HepG2 (cell line): ENCODE measurements at regions of chr20 and their contacts with region 1.

Region 1: DNA sequence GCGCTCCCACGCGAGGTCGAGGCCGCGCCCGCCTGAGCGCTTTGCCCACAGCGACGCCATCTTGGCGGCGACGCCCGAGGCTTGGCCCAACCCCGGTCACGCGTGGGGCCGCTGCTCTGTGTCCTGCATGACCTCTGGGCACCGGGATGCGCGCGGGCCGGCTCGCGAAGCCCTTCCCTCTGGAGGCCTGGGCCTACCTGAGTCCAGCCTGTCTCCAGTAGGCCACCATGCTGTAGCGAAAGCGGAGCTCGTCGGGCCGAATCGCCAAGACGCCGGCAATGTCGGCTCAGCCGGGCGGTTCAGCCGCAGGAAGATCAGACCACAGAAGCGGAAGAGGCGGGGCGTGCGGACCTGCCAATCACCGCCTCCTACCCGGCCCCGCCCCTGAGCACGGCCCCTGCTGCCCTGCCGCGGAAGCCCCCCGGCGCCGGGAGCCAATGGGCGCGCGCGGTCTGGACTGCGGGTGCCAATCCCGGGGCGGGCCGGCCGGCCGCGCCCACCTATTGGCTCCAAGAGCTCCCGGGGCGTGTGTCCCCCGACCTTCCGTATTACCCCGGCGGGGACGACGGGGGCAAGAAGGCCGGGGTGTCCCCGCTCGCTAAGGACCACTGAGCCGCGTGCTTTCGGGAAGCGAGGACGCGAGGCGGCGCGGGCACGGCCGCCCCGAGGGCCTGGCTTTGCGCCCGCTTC is at the start of gene ATP5F1E:
- DNase-seq: peak; percentile 95
- ATAC-seq: peak; percentile 99
- H3K4me3 ChIP-seq: peak within 1 kb of the TSS; percentile 78 to 97 (median 93)
- H3K27ac ChIP-seq: peak within 1 kb of the TSS; percentile 68
- H3K4me1 ChIP-seq: peaks cover 52% of the 10 kb centered on the region
- H3K27me3 ChIP-seq: no peaks in the 10 kb centered on the region; a peak in 1 of 5 replicates
- CTCF ChIP-seq: peak; percentile 21; the same call in 1 of the 2 replicates
- EP300 ChIP-seq: 0 out of 4 replicates have a peak, but pooled peaks of 1 of the 2 experiments have one; percentile 5
- POLR2A ChIP-seq: peak; percentile 91 to 95
- RAD21 ChIP-seq: peak; percentile 69
- total RNA-seq, gene ATP5F1E: 134 and 163 TPM in 2 replicates

Region 2: GRCh38 chr20:58980700-58981627 is 51.2 kb before region 1 on chr20 and contains the start of gene NELFCD:
- CTCF ChIA-PET with region 1: no interaction called
- POLR2A ChIA-PET with region 1: interaction called, 68 read pairs
- in situ Hi-C with region 1: no loop called
- intact Hi-C with region 1: loop called (anchors 1 kb)
- DNase-seq: peak; percentile 90
- ATAC-seq: peak; percentile 92
- H3K4me3 ChIP-seq: peak within 1 kb of the TSS; percentile 75 to 85 (median 80)
- H3K27ac ChIP-seq: peak within 1 kb of the TSS; percentile 74
- H3K4me1 ChIP-seq: peaks cover 57% of the 10 kb centered on the region
- H3K27me3 ChIP-seq: no peaks in the 10 kb centered on the region; a peak in 1 of 5 replicates
- CTCF ChIP-seq: peak; percentile 31; the same call in 1 of the 2 replicates
- EP300 ChIP-seq: 0 out of 4 replicates have a peak, but pooled peaks of 1 of the 2 experiments have one; percentile 21
- POLR2A ChIP-seq: peak; percentile 78 to 95
- RAD21 ChIP-seq: peak; percentile 38
- total RNA-seq, gene NELFCD: 159 and 160 TPM in 2 replicates

Region 3: GRCh38 chr20:59004763-59005522 is 27.2 kb before region 1 on chr20:
- CTCF ChIA-PET with region 1: no interaction called
- POLR2A ChIA-PET with region 1: interaction called, 19 read pairs
- in situ Hi-C with region 1: no loop called
- intact Hi-C with region 1: no loop called
- DNase-seq: peak; percentile 71
- ATAC-seq: peak; percentile 65
- H3K4me3 ChIP-seq: peak overlapping the region; percentile 13 to 73 (median 20); a peak in 5 of 6 replicates
- H3K27ac ChIP-seq: no peak overlapping the region
- H3K4me1 ChIP-seq: peaks cover 86% of the 10 kb centered on the region
- H3K27me3 ChIP-seq: peaks cover 2 to 27% of the 10 kb centered on the region in 2 experiments
- CTCF ChIP-seq: peak; percentile 9; the same call in 1 of the 2 replicates
- EP300 ChIP-seq: peak in 1 of 2 experiments; percentile 42; a peak in 2 of 4 replicates
- POLR2A ChIP-seq: no peak
- RAD21 ChIP-seq: no peak

Region 4: GRCh38 chr20:59020938-59021551 is 11.1 kb before region 1 on chr20:
- CTCF ChIA-PET with region 1: no interaction called
- POLR2A ChIA-PET with region 1: interaction called, 61 read pairs
- in situ Hi-C with region 1: no loop called
- intact Hi-C with region 1: loop called (anchors 1 kb)
- DNase-seq: no peak
- ATAC-seq: no peak
- H3K4me3 ChIP-seq: no peak overlapping the region
- H3K27ac ChIP-seq: no peak overlapping the region
- H3K4me1 ChIP-seq: peaks cover 45% of the 10 kb centered on the region
- H3K27me3 ChIP-seq: no peaks in the 10 kb centered on the region
- CTCF ChIP-seq: no peak
- EP300 ChIP-seq: no peak
- POLR2A ChIP-seq: no peak
- RAD21 ChIP-seq: no peak

Region 5: GRCh38 chr20:59137532-59137931 is 105.4 kb after region 1 on chr20:
- CTCF ChIA-PET with region 1: no interaction called
- POLR2A ChIA-PET with region 1: no interaction called
- in situ Hi-C with region 1: no loop called
- intact Hi-C with region 1: no loop called
- DNase-seq: no peak
- ATAC-seq: no peak
- H3K4me3 ChIP-seq: no peak overlapping the region
- H3K27ac ChIP-seq: no peak overlapping the region
- H3K4me1 ChIP-seq: no peaks in the 10 kb centered on the region
- H3K27me3 ChIP-seq: peaks cover 0 to 2% of the 10 kb centered on the region in 2 experiments; a peak in 1 of 5 replicates
- CTCF ChIP-seq: no peak
- EP300 ChIP-seq: no peak
- POLR2A ChIP-seq: no peak
- RAD21 ChIP-seq: no peak

Region 6: GRCh38 chr20:60297644-60298043 is 1265.5 kb after region 1 on chr20:
- CTCF ChIA-PET with region 1: no interaction called
- POLR2A ChIA-PET with region 1: no interaction called
- in situ Hi-C with region 1: no loop called
- intact Hi-C with region 1: no loop called
- DNase-seq: no peak
- ATAC-seq: no peak; the same call in 2 of the 3 replicates
- H3K4me3 ChIP-seq: no peak overlapping the region
- H3K27ac ChIP-seq: no peak overlapping the region
- H3K4me1 ChIP-seq: no peaks in the 10 kb centered on the region
- H3K27me3 ChIP-seq: peaks cover 0 to 5% of the 10 kb centered on the region in 2 experiments; a peak in 1 of 5 replicates
- CTCF ChIP-seq: no peak
- EP300 ChIP-seq: no peak
- POLR2A ChIP-seq: no peak
- RAD21 ChIP-seq: no peak